ENCODE measurements at regions of chr12 and their contacts with region 1.

Region 1: GRCh38 chr12:129009833-129010622 is 156.8 kb downstream of the GLT1D1 start:
- DNase-seq: no peak
- H3K4me3 ChIP-seq: no peak overlapping the region
- H3K27ac ChIP-seq: no peak overlapping the region
- H3K4me1 ChIP-seq: no peaks in the 10 kb centered on the region
- H3K27me3 ChIP-seq: no peaks in the 10 kb centered on the region
- CTCF ChIP-seq: no peak
- POLR2A ChIP-seq: no peak

Region 2: DNA sequence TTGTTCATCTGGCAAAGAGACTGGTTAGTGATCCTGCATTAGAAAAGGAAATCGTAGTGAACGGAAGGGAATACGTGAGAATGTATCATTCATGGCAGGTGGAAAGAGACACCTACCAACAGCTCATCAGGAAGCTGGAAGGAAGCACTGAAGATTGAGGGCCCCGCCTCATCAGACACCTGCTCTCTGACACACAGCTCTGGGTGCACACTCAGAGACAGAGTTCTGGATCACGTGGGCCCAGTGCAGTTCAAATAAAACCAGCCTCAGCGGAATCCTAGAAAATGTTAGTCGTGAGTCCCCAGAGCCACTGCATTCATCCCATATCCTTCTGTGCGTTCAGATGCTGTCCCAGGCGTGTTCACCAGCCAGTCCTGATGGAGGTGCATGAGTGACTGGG is 27.1 kb before region 1 on chr12:
- intact Hi-C with region 1: no loop called
- DNase-seq: no peak
- H3K4me3 ChIP-seq: no peak overlapping the region
- H3K27ac ChIP-seq: no peak overlapping the region
- H3K4me1 ChIP-seq: no peaks in the 10 kb centered on the region
- H3K27me3 ChIP-seq: peaks cover 0 to 4% of the 10 kb centered on the region in 2 donors
- CTCF ChIP-seq: no peak
- POLR2A ChIP-seq: no peak

Region 3: DNA sequence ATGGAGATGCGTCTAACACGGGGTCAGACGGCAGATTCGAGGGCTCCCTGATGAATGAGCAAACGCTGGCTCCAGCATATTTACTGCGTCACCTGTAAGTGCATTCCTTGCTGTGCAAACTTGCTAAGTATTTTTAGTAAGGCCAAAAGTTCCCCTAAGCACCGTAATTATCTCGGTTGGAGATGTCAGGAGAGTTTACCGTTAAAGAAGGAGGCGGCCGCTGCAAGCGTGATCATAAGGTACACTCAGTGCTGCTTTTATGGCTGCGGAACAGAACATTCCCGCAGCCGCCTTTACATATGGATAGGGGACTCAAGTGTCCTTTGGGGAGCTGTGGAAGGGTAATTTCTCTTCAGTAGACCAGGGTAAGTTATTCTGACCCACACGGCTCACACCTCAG is 18.8 kb after region 1 on chr12:
- intact Hi-C with region 1: loop called (anchors 1 kb)
- DNase-seq: no peak
- H3K4me3 ChIP-seq: no peak overlapping the region
- H3K27ac ChIP-seq: no peak overlapping the region
- H3K4me1 ChIP-seq: no peaks in the 10 kb centered on the region
- H3K27me3 ChIP-seq: no peaks in the 10 kb centered on the region
- CTCF ChIP-seq: no peak
- POLR2A ChIP-seq: no peak